ENCODE measurements at regions of chr10 and their contacts with region 1.

Region 1: GRCh38 chr10:86899670-86900276 is 57.6 kb downstream of the MMRN2 start:
- DNase-seq: peak in 1 of 3 donors; percentile 62
- ATAC-seq: peak; percentile 55 to 65
- H3K4me3 ChIP-seq: no peak overlapping the region
- H3K27ac ChIP-seq: no peak overlapping the region
- H3K4me1 ChIP-seq: no peaks in the 10 kb centered on the region
- H3K27me3 ChIP-seq: no peaks in the 10 kb centered on the region

Region 2: DNA sequence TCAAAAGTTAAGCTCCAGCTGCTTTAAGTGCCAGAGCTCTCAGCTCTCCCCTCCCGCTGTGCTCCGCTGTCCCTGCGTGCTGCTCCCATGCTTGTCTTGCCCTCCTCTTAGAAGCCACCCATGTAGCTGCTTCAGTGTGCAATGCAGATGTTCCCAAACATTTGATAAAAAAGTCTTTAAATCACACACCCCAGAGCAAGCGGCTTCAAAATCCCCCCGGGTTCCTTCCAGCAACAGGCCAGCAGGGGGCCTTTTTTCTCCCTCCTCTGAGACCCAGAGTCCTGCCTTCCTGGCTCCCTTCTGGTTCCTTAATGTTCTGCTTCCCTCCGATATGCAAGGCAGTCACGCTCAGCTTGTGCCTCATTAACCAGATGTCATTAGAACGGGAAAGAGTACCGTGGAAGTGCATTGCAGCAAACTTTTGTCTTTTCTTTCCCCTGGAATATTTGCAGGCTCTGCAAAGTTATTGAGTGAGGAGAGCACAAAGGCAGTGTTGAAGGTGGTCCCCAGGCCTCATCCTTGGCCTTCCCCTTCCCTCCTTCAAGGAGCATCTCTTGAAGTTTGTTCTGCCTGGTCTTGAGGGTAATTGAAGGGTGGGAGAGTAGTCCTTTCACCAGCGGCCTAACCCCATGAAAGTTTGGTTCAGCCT is 205.9 kb before region 1 on chr10:
- intact Hi-C with region 1: loop called in 3 of 4 experiments (anchors 5 to 10 kb)
- DNase-seq: peak; percentile 54 to 83 (median 75)
- ATAC-seq: no peak
- H3K4me3 ChIP-seq: no peak overlapping the region
- H3K27ac ChIP-seq: peak overlapping the region; percentile 23
- H3K4me1 ChIP-seq: no peaks in the 10 kb centered on the region
- H3K27me3 ChIP-seq: no peaks in the 10 kb centered on the region

Region 3: DNA sequence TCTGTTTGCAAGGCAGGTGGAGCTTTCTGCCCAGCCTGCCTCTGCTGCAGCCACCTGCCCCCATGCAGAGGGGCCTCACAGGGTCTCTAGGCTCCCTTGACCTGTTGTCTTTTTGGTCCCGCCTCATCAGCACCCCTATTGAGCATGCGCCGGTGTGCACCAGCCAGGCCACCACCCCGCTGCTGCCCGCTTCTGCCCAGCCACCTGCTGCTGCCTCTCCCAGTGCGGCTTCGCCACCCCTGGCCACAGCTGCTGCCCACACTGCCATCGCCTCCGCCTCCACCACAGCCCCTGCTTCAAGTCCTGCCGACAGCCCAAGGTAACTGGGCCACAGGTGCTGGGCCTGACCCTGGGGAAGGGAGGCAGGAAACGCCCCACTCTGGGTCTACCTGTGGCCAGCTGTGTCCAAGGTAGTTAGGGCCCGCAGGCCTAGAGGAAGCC is 193.4 kb before region 1 on chr10:
- intact Hi-C with region 1: loop called in 1 of 4 experiments (anchors 5 kb)
- DNase-seq: no peak
- ATAC-seq: no peak
- H3K4me3 ChIP-seq: no peak overlapping the region
- H3K27ac ChIP-seq: no peak overlapping the region
- H3K4me1 ChIP-seq: no peaks in the 10 kb centered on the region
- H3K27me3 ChIP-seq: no peaks in the 10 kb centered on the region

Region 4: GRCh38 chr10:86755740-86756510 is 143.8 kb before region 1 on chr10:
- intact Hi-C with region 1: loop called in 3 of 4 experiments (anchors 2 to 10 kb)
- DNase-seq: peak; percentile 85 to 93 (median 92)
- ATAC-seq: peak; percentile 90
- H3K4me3 ChIP-seq: peak overlapping the region; percentile 70
- H3K27ac ChIP-seq: peak overlapping the region; percentile 86
- H3K4me1 ChIP-seq: peaks cover 3% of the 10 kb centered on the region
- H3K27me3 ChIP-seq: no peaks in the 10 kb centered on the region